ENCODE measurements at regions of chr1 and their contacts with region 1.

Region 1: GRCh38 chr1:174982971-174983689 is 16.6 kb upstream of the CACYBP start:
- DNase-seq: peak; percentile 67
- ATAC-seq: peak; percentile 24
- H3K4me3 ChIP-seq: no peak overlapping the region
- H3K4me3 Mint-ChIP-seq: no peak overlapping the region
- H3K27ac ChIP-seq: no peak overlapping the region
- H3K27ac Mint-ChIP-seq: peak overlapping the region; percentile 17
- H3K4me1 ChIP-seq: no peaks in the 10 kb centered on the region
- H3K4me1 Mint-ChIP-seq: peaks cover 4% of the 10 kb centered on the region
- H3K27me3 ChIP-seq: no peaks in the 10 kb centered on the region
- H3K27me3 Mint-ChIP-seq: no peaks in the 10 kb centered on the region
- CTCF ChIP-seq: peak; percentile 81

Region 2: GRCh38 chr1:174764191-174764590 is 218.9 kb before region 1 on chr1:
- CTCF ChIA-PET with region 1: interaction called, 40 read pairs
- POLR2A ChIA-PET with region 1: no interaction called
- intact Hi-C with region 1: no loop called
- DNase-seq: no peak
- ATAC-seq: no peak
- H3K4me3 ChIP-seq: no peak overlapping the region
- H3K4me3 Mint-ChIP-seq: no peak overlapping the region
- H3K27ac ChIP-seq: no peak overlapping the region
- H3K27ac Mint-ChIP-seq: no peak overlapping the region
- H3K4me1 ChIP-seq: no peaks in the 10 kb centered on the region
- H3K4me1 Mint-ChIP-seq: peaks cover 11% of the 10 kb centered on the region
- H3K27me3 ChIP-seq: no peaks in the 10 kb centered on the region
- H3K27me3 Mint-ChIP-seq: no peaks in the 10 kb centered on the region
- CTCF ChIP-seq: no peak

Region 3: GRCh38 chr1:174769961-174770549 is 213.1 kb before region 1 on chr1:
- CTCF ChIA-PET with region 1: interaction called, 50 read pairs
- POLR2A ChIA-PET with region 1: no interaction called
- intact Hi-C with region 1: loop called (anchors 1 kb)
- DNase-seq: peak; percentile 63
- ATAC-seq: peak; percentile 57
- H3K4me3 ChIP-seq: no peak overlapping the region
- H3K4me3 Mint-ChIP-seq: no peak overlapping the region
- H3K27ac ChIP-seq: no peak overlapping the region
- H3K27ac Mint-ChIP-seq: no peak overlapping the region
- H3K4me1 ChIP-seq: no peaks in the 10 kb centered on the region
- H3K4me1 Mint-ChIP-seq: peaks cover 8% of the 10 kb centered on the region
- H3K27me3 ChIP-seq: no peaks in the 10 kb centered on the region
- H3K27me3 Mint-ChIP-seq: no peaks in the 10 kb centered on the region
- CTCF ChIP-seq: peak; percentile 86

Region 4: DNA sequence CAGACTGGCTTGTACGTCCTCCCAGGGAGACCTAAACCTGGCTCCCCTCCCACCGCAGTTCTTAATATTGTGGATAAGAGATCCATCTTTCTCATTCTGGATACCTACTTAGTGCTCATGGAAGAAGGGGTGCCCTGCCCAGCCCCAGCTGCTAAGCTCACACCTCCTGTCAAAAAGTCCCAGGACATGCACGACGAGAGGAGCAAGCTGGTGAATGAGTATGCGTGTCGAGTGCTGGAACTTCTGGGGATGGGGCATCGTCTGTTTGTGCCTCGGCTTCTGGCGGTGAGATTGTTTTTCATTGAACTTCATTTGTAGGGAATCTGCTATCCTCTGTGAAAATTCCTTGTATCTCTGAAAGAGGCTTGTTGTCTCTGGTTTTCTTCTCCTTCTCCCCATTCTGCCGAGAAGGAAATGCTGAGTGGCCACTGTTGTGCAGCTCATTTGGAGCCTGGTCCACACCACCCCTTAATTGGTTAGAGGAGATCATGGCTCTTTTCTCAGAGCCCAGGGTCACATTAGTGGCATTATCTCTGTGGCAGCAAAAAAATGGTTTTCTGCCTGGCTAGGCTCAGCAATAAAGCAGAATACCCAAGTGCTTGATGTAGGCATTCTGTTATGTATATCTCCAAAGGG is 182.8 kb before region 1 on chr1:
- CTCF ChIA-PET with region 1: interaction called, 12 read pairs
- POLR2A ChIA-PET with region 1: no interaction called
- intact Hi-C with region 1: no loop called
- DNase-seq: no peak
- ATAC-seq: no peak
- H3K4me3 ChIP-seq: peak overlapping the region; percentile 65 to 97 (median 68)
- H3K4me3 Mint-ChIP-seq: no peak overlapping the region
- H3K27ac ChIP-seq: peak overlapping the region; percentile 78 to 88
- H3K27ac Mint-ChIP-seq: no peak overlapping the region
- H3K4me1 ChIP-seq: peaks cover 14 to 17% of the 10 kb centered on the region in 2 donors
- H3K4me1 Mint-ChIP-seq: peaks cover 14% of the 10 kb centered on the region
- H3K27me3 ChIP-seq: no peaks in the 10 kb centered on the region
- H3K27me3 Mint-ChIP-seq: no peaks in the 10 kb centered on the region
- CTCF ChIP-seq: no peak

Region 5: GRCh38 chr1:174874331-174875053 is 108.6 kb before region 1 on chr1:
- CTCF ChIA-PET with region 1: interaction called, 11 read pairs
- POLR2A ChIA-PET with region 1: no interaction called
- intact Hi-C with region 1: loop called (anchors 5 kb)
- DNase-seq: peak; percentile 47
- ATAC-seq: peak; percentile 48
- H3K4me3 ChIP-seq: peak overlapping the region; percentile 30 to 68 (median 63)
- H3K4me3 Mint-ChIP-seq: peak overlapping the region; percentile 91
- H3K27ac ChIP-seq: peak overlapping the region in 1 of 2 donors; percentile 72
- H3K27ac Mint-ChIP-seq: peak overlapping the region; percentile 86
- H3K4me1 ChIP-seq: peaks cover 20 to 31% of the 10 kb centered on the region in 2 donors
- H3K4me1 Mint-ChIP-seq: peaks cover 51% of the 10 kb centered on the region
- H3K27me3 ChIP-seq: no peaks in the 10 kb centered on the region
- H3K27me3 Mint-ChIP-seq: no peaks in the 10 kb centered on the region
- CTCF ChIP-seq: no peak

Region 6: DNA sequence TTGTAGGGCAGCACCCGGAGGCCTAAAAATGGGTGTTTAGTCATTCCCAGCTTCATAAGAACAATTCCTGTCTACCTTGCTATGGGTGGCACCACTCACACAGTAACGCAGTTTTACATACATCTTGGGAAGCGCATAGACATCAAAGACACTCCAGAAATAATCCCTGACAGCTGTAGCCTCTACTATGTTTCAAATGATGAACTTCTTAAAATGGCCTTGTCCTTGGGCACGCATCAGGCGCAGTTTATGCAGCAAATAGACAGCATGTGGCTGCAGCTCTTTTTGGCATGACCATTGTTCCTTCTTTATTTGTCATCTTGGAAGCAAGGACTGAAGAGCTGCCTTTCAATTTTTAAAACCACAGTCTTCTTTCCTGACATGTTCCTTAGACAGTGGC is 61.0 kb before region 1 on chr1:
- CTCF ChIA-PET with region 1: no interaction called
- POLR2A ChIA-PET with region 1: no interaction called
- intact Hi-C with region 1: no loop called
- DNase-seq: no peak
- ATAC-seq: no peak
- H3K4me3 ChIP-seq: no peak overlapping the region
- H3K4me3 Mint-ChIP-seq: no peak overlapping the region
- H3K27ac ChIP-seq: no peak overlapping the region
- H3K27ac Mint-ChIP-seq: no peak overlapping the region
- H3K4me1 ChIP-seq: peaks cover 0 to under 1% of the 10 kb centered on the region in 2 donors
- H3K4me1 Mint-ChIP-seq: peaks cover under 1% of the 10 kb centered on the region
- H3K27me3 ChIP-seq: no peaks in the 10 kb centered on the region
- H3K27me3 Mint-ChIP-seq: no peaks in the 10 kb centered on the region
- CTCF ChIP-seq: no peak

Region 7: GRCh38 chr1:174942547-174943255 is 40.4 kb before region 1 on chr1:
- CTCF ChIA-PET with region 1: interaction called, 12 read pairs
- POLR2A ChIA-PET with region 1: no interaction called
- intact Hi-C with region 1: no loop called
- DNase-seq: peak; percentile 22
- ATAC-seq: peak; percentile 76
- H3K4me3 ChIP-seq: no peak overlapping the region
- H3K4me3 Mint-ChIP-seq: no peak overlapping the region
- H3K27ac ChIP-seq: no peak overlapping the region
- H3K27ac Mint-ChIP-seq: peak overlapping the region; percentile 72
- H3K4me1 ChIP-seq: peaks cover 4 to 9% of the 10 kb centered on the region in 2 donors
- H3K4me1 Mint-ChIP-seq: peaks cover 23% of the 10 kb centered on the region
- H3K27me3 ChIP-seq: no peaks in the 10 kb centered on the region
- H3K27me3 Mint-ChIP-seq: no peaks in the 10 kb centered on the region
- CTCF ChIP-seq: no peak

Region 8: DNA sequence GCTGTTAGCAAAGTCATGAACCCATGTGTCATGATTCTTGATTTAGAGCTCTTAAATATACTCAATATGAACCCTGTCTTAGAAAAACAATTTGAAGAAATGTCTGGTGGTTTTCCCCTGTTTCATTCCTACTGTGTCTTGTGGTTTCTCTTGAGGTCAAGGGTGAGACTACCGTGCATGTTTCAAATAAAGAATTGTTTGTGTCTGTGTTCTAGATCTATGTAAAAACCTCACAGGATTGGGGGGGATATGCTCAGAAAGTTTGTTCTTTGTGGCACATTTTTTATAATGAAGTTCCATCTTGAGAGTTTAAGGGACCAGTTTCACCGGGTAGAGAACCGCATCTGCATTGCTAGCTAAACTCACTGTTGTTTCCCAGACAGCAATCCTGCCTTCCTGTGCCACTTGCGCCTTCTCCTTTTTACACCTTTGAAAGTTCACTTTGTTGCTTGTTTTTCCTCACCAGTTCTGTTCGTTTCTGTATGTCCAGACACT is 14.3 kb before region 1 on chr1:
- CTCF ChIA-PET with region 1: interaction called, 12 read pairs
- POLR2A ChIA-PET with region 1: interaction called, 5 read pairs
- intact Hi-C with region 1: loop called (anchors 2 kb)
- DNase-seq: peak; percentile 41
- ATAC-seq: peak; percentile 58
- H3K4me3 ChIP-seq: peak overlapping the region in 1 of 5 experiments; percentile 0
- H3K4me3 Mint-ChIP-seq: peak overlapping the region; percentile 82
- H3K27ac ChIP-seq: peak overlapping the region; percentile 38 to 63
- H3K27ac Mint-ChIP-seq: peak overlapping the region; percentile 90
- H3K4me1 ChIP-seq: peaks cover 47 to 55% of the 10 kb centered on the region in 2 donors
- H3K4me1 Mint-ChIP-seq: peaks cover 59% of the 10 kb centered on the region
- H3K27me3 ChIP-seq: no peaks in the 10 kb centered on the region
- H3K27me3 Mint-ChIP-seq: no peaks in the 10 kb centered on the region
- CTCF ChIP-seq: no peak

Measured in B cell (primary cell).